ENCODE measurements at regions of chr5 and their contacts with region 1.

Region 1: GRCh38 chr5:141135030-141135717 is at the start of gene PCDHB5:
- DNase-seq: peak; percentile 72
- ATAC-seq: peak; percentile 89
- H3K4me3 Mint-ChIP-seq: peak within 1 kb of the TSS; percentile 74
- H3K27ac Mint-ChIP-seq: peak within 1 kb of the TSS; percentile 64; the same call in 1 of the 2 replicates
- H3K4me1 Mint-ChIP-seq: peaks cover 4% of the 10 kb centered on the region; the same call in 1 of the 2 replicates
- H3K27me3 Mint-ChIP-seq: no peaks in the 10 kb centered on the region
- CTCF ChIP-seq: peak; percentile 72
- total RNA-seq, gene PCDHB5: 6.8 to 12.5 TPM (median 8.5 TPM) in 3 replicates

Region 2: DNA sequence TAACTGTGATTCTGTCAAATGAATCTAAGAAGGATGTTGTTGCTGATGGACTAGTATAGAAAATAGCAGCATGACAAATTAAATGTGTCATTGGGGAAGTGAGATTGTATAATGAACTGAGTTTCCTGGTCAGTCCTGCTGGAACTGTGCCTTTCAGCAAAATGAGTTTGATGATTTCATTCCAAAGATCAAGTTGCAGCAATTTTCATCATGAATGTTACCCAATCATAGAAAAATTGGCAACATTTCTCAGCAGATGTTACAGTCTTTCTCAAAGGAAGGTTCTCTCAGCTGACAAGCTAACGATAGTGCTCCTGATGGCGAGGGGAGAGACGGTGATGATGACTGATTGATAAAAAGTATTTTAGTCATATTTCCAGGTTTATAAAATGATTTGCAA is 158.2 kb before region 1 on chr5:
- CTCF ChIA-PET with region 1: no interaction called
- POLR2A ChIA-PET with region 1: no interaction called
- DNase-seq: no peak
- ATAC-seq: no peak
- H3K4me3 Mint-ChIP-seq: no peak overlapping the region
- H3K27ac Mint-ChIP-seq: peak overlapping the region; percentile 15; the same call in 1 of the 2 replicates
- H3K4me1 Mint-ChIP-seq: peaks cover 33% of the 10 kb centered on the region
- H3K27me3 Mint-ChIP-seq: no peaks in the 10 kb centered on the region
- CTCF ChIP-seq: no peak

Region 3: DNA sequence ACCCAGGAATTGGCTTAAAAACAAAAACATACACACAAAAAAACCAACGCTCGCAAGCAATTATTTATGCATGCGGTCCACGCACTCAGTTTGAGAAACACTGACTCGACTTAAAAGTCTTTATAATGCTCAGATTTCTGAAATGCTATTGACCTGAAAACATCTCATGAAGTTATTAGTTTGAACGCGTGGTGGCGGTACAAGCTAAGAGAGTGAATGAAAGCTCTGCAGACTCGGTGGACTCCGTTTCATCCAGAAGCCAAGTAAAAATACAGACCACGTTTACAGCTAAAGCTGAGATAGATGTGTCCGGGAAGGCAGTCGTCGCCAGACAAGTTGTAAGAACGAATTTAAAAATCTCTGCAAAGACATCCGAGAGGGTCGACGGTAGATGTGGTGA is 14.6 kb after region 1 on chr5 and contains the start of gene PCDHB6:
- CTCF ChIA-PET with region 1: interaction called, 45 read pairs
- POLR2A ChIA-PET with region 1: no interaction called
- DNase-seq: no peak
- ATAC-seq: peak; percentile 74
- H3K4me3 Mint-ChIP-seq: no peak within 1 kb of the TSS
- H3K27ac Mint-ChIP-seq: no peak within 1 kb of the TSS
- H3K4me1 Mint-ChIP-seq: no peaks in the 10 kb centered on the region
- H3K27me3 Mint-ChIP-seq: peaks cover 4% of the 10 kb centered on the region; the same call in 1 of the 2 replicates
- CTCF ChIP-seq: no peak
- total RNA-seq, gene PCDHB6: 0.23 to 0.37 TPM (median 0.24 TPM) in 3 replicates

Region 4: GRCh38 chr5:141172378-141173204 is 37.4 kb after region 1 on chr5 and contains the start of gene PCDHB7:
- CTCF ChIA-PET with region 1: interaction called, 16 read pairs
- POLR2A ChIA-PET with region 1: no interaction called
- DNase-seq: peak; percentile 57
- ATAC-seq: no peak
- H3K4me3 Mint-ChIP-seq: no peak within 1 kb of the TSS
- H3K27ac Mint-ChIP-seq: no peak within 1 kb of the TSS
- H3K4me1 Mint-ChIP-seq: no peaks in the 10 kb centered on the region
- H3K27me3 Mint-ChIP-seq: peaks cover 3% of the 10 kb centered on the region; the same call in 1 of the 2 replicates
- CTCF ChIP-seq: peak; percentile 66
- total RNA-seq, gene PCDHB7: 0.17 to 0.27 TPM (median 0.23 TPM) in 3 replicates

Region 5: GRCh38 chr5:141465351-141465750 is 330.2 kb after region 1 on chr5:
- CTCF ChIA-PET with region 1: no interaction called
- POLR2A ChIA-PET with region 1: no interaction called
- DNase-seq: no peak
- ATAC-seq: no peak
- H3K4me3 Mint-ChIP-seq: no peak overlapping the region
- H3K27ac Mint-ChIP-seq: peak overlapping the region; percentile 17; the same call in 1 of the 2 replicates
- H3K4me1 Mint-ChIP-seq: no peaks in the 10 kb centered on the region
- H3K27me3 Mint-ChIP-seq: no peaks in the 10 kb centered on the region
- CTCF ChIP-seq: no peak

Measured in WTC11 (cell line).